KBM-7 (cell line): ENCODE measurements at regions of chr13 and their contacts with region 1.

Region 1: DNA sequence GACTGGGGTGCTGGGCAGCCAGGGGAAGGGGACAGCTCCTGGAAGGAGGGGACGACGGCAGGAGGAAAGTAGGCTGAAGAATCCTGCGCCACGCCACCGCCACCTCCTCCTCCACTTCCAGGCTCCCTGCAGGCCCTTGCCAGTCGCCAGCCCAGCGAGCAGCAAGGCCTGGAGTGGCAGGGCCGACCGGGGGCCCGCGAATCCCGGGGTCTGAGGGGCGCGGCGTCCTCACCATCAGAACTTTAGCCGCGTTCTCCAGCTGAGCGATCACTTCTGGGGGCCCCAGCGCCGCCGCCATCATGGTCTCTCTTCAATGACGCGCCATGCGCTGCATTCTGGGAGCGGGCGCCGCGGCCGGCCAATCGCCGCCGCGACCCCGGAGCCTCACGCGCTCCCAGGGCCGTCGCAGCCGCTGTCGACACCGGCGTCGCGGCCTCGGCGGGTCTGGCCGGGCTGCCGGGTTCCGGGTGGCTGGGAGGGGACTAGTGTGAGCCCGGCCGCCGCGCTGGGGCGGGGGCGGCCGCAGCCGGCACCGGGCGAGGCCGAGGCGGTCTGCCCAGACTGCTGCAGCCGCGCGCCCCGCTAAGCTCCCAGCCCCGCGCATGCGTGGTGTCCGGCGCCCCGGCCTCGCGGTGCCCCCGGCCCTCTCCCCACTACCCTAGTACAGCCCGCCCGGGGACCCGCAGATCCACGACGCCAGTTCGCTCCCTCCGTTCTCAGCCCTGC is at the start of gene XPO4:
- DNase-seq: peak; percentile 79

Region 2: DNA sequence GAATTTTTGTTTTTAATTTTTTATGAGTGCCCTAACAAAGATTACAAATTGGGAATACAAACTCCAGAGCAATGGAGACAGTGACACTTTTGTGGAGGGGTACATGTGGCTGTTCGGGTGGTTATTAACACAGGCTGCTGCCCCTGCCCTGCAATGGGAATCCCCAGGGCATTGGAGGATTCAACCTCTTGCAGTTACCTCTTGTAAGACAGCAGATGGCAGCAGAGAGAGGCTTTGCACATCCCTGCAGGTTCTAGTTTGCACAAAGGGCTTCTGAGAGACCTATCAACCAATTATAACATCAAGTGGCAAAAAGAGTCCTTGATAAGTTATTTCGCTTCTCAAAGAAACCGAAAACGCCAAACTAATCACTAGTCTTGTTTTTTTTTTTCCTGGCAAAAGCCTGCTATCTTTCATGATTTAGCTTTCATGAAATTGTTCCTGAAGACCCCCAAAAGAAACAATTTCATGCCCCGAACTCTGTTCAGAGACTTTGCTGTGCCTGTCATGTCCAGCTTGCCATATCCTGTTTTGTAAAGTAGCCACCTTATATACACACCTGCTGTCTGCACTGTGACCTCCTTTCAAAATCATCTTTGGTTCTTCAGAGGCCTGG is 720.3 kb before region 1 on chr13:
- in situ Hi-C with region 1: loop called (anchors 25 kb)
- DNase-seq: peak; percentile 76

Region 3: GRCh38 chr13:20414546-20415305 is 487.9 kb before region 1 on chr13:
- in situ Hi-C with region 1: no loop called
- DNase-seq: no peak

Region 4: DNA sequence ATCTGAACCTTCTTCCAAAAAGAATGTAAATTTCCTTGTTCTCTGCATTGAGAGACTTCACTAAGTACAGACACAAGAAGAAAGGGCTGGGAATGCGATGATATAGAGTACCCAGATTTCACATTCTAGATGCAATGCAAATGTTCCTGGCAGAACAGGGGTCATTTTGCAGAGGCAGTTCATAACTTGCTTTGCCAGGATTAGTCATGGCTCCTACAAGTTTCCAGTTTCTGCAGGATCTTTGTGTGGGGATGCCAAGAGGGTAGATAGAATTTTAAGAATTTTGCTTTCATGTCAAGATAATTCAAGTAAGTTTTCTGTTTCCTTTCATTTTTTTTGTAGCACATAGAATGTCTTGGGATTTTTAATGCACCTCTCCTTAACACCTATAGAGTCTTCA is 949.4 kb after region 1 on chr13:
- in situ Hi-C with region 1: no loop called
- DNase-seq: no peak